GM10248 (cell line): ENCODE measurements at regions of chr20 and their contacts with region 1.

Region 1: DNA sequence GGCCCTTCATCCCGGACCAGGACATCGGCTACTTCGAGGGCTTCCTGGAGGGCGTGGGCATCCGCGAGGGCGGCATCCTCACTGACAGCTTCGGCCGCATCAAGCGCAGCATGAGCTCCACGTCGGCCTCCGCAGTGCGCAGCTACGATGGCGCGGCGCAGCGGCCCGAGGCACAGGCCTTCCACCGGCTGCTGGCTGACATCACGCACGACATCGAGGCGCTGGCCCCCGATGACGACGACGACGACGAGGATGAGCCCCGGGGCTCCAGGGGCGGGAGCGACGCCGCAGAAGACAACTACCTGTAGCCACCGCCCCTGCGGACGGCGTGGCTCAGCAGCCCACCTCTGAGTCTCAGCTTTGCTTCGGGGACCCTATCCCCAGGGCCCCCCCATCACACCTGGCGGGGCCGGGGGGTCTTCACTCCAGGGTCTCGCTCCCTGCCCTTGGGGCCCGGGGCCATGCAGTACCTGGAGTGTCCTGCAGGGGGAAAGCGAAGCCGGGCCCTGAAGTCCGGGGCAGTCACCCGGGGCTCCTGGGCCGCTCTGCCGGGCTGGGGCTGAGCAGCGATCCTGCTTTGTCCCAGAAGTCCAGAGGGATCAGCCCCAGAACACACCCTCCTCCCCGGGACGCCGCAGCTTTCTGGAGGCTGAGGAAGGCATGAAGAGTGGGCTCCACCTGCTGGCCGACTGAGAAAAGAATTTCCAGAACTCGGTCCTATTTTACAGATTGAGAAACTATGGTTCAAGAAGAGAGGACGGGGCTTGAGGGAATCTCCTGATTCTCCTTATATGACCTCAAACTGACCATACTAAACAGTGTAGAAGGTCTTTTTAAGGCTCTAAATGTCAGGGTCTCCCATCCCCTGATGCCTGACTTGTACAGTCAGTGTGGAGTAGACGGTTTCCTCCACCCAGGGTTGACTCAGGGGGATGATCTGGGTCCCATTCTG is 20.8 kb upstream of the HCK start:
- DNase-seq: peak; percentile 69
- CTCF ChIP-seq: peak; percentile 60

Region 2: DNA sequence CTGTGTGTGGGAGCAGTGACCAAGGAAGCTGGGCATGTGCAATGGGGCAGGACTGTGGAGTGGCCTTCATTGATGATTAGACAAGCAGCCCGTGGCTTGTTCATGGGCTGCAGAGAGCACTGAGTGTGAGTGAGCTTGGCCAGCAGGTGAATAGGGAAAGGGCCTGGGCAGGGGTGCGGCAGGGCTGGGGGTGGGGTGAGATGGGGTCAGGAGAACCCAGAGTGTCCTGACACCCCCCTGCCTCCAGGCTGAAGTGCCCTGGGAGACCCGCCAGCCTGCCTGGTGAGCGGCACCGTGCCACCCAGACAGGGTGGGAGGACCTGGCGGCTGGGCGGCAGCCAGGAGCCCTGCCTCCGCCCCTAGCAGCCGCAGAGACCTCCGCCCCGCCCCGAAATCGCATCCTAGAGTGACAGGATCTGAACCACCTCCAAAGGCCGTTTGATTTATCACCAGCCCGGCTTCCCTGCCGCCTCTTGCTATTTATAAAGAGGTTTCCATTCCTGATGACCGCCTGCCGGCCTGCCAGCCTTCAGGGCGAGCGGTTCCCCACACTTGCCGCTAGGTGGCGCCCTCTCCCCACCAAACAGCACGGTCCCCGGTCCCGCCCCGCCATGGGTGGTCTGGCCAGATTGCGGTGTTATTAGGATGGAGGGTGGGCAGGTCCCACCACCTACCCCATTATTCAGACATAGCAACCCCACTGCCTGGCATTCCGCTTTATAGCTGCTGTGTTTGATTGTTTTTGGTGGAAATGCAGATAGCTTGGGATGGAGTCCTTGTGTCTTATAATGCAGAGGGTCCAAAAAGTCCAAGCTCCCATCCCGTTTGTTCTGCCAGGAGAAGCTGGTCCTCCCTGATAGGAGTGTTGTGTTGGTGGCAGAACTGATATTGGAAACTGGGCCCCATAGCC is 208.6 kb before region 1 on chr20:
- CTCF ChIA-PET with region 1: interaction called, 61 read pairs
- POLR2A ChIA-PET with region 1: no interaction called
- DNase-seq: peak; percentile 92
- CTCF ChIP-seq: peak; percentile 96

Region 3: GRCh38 chr20:31861346-31862156 is 169.7 kb before region 1 on chr20:
- CTCF ChIA-PET with region 1: interaction called, 89 read pairs
- POLR2A ChIA-PET with region 1: no interaction called
- DNase-seq: peak; percentile 92
- CTCF ChIP-seq: no peak

Region 4: DNA sequence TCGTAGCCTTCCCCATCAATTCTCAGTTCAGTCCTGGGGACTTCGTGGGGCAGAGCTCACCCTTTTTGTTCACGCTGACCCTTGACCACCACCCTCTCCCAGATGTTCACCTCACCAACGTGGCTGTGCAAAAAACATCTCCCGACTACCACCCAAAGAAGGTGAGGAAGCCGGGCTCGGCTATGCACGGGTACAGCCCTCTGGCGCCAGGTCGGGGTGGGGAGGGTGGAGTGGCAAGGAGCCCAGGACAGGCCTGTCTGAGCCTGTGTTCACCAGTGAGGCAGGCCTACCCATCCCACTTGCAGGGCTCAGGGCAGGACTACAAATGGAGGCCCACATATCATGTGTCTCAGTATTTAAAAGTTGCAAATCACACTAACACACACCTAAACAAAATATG is 97.6 kb before region 1 on chr20:
- CTCF ChIA-PET with region 1: no interaction called
- POLR2A ChIA-PET with region 1: no interaction called
- DNase-seq: no peak
- CTCF ChIP-seq: no peak

Region 5: GRCh38 chr20:32007787-32008616 is 23.3 kb before region 1 on chr20:
- CTCF ChIA-PET with region 1: interaction called, 14 read pairs
- POLR2A ChIA-PET with region 1: no interaction called
- DNase-seq: no peak
- CTCF ChIP-seq: no peak

Region 6: GRCh38 chr20:32062776-32063170 is 31.5 kb after region 1 on chr20:
- CTCF ChIA-PET with region 1: interaction called, 34 read pairs
- POLR2A ChIA-PET with region 1: interaction called, 3 read pairs
- DNase-seq: peak; percentile 54
- CTCF ChIP-seq: no peak

Region 7: GRCh38 chr20:32091888-32092346 is 60.6 kb after region 1 on chr20:
- CTCF ChIA-PET with region 1: interaction called, 61 read pairs
- POLR2A ChIA-PET with region 1: no interaction called
- DNase-seq: peak; percentile 79
- CTCF ChIP-seq: peak; percentile 89

Region 8: DNA sequence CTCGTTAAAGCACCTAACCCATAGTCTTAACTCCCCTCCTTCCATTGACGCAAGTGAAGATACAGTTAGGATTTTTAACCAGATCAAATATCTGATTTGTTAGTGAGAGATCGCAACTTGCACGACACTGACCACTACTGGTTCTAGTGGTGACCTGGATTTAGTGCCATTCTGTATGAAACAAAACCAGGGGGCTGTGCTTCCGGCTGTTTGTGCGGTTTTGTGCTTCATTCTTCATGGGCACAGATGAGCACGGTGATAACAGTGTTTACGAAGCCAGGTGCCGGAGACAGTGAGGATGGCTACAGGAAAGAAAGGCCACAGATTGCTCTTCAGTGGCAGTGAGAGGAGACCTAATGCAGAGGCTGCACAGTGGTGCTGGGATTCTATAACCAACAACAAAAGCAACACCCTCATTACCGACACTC is 478.4 kb after region 1 on chr20:
- CTCF ChIA-PET with region 1: no interaction called
- POLR2A ChIA-PET with region 1: no interaction called
- DNase-seq: no peak
- CTCF ChIP-seq: peak; percentile 18